ENCODE measurements at regions of chr15 and their contacts with region 1.

Region 1: GRCh38 chr15:82709421-82710207 is at the start of gene AP3B2:
- DNase-seq: peak; percentile 78
- ATAC-seq: peak; percentile 88
- H3K4me3 ChIP-seq: peak within 1 kb of the TSS in 4 of 5 experiments; percentile 38 to 72 (median 60)
- H3K4me3 Mint-ChIP-seq: peak within 1 kb of the TSS; percentile 77
- H3K27ac ChIP-seq: no peak within 1 kb of the TSS
- H3K27ac Mint-ChIP-seq: no peak within 1 kb of the TSS
- H3K4me1 ChIP-seq: peaks cover 0 to 12% of the 10 kb centered on the region in 2 donors
- H3K4me1 Mint-ChIP-seq: peaks cover 2% of the 10 kb centered on the region
- H3K27me3 ChIP-seq: peaks cover 0 to 45% (median 5%) of the 10 kb centered on the region in 4 experiments
- H3K27me3 Mint-ChIP-seq: peaks cover 30% of the 10 kb centered on the region
- CTCF ChIP-seq: no peak
- total RNA-seq, gene AP3B2: 0.15 and 0.61 TPM in 2 replicates

Region 2: DNA sequence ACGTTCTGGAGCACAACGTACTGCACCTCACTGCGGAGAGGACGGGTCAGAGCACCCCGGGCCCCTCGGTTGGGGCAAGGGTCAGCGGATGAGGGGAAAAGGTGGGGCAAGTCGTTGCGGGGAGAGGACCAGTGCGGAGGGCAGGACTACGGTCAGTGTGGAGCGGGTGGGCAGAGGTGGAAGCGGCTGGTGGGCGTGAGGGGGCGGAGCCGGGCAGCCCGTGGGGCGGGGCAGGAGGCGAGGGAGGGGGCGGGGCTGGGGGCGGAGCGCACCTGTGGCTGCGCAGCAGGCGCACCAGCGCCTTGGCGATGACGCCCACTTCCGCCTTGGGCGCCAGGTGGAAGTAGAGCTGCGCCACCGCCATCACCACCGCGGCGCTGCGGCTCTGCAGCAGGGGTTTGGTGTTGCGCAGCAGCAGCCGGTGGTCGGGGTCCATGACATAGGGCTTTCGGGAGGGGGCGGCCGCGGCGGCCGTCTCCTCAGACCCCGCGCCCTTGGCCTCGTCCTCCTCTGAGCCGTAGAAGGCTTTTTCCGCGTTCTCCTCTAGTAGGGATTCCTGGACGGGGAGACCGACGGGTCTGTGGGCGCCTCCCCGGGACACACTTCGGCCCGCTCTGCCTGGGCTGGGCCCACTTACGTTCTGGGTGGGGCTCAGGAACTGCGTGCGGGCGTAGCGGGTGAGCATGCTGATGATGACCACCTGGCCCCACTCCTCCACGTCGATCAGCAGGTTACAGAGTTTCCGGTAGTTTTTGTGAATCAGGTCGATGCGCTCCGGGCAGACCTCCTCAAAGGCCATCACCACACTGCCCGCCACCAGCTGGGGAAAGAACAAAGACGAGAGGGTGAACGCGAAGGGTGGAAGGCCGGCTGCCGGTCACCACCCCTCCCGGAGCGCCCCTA is 29.2 kb before region 1 on chr15:
- CTCF ChIA-PET with region 1: no interaction called
- POLR2A ChIA-PET with region 1: no interaction called
- intact Hi-C with region 1: loop called (anchors 1 kb)
- DNase-seq: peak; percentile 85
- ATAC-seq: peak; percentile 91
- H3K4me3 ChIP-seq: peak overlapping the region in 4 of 5 experiments; percentile 61 to 84 (median 72)
- H3K4me3 Mint-ChIP-seq: peak overlapping the region; percentile 92
- H3K27ac ChIP-seq: peak overlapping the region; percentile 46 to 65
- H3K27ac Mint-ChIP-seq: peak overlapping the region; percentile 87
- H3K4me1 ChIP-seq: peaks cover 14 to 15% of the 10 kb centered on the region in 2 donors
- H3K4me1 Mint-ChIP-seq: peaks cover 12% of the 10 kb centered on the region
- H3K27me3 ChIP-seq: peaks cover 0 to 21% (median 6%) of the 10 kb centered on the region in 4 experiments
- H3K27me3 Mint-ChIP-seq: peaks cover 6% of the 10 kb centered on the region
- CTCF ChIP-seq: peak; percentile 21

Region 3: GRCh38 chr15:82749951-82750830 is 40.6 kb after region 1 on chr15:
- CTCF ChIA-PET with region 1: no interaction called
- POLR2A ChIA-PET with region 1: no interaction called
- intact Hi-C with region 1: loop called (anchors 1 kb)
- DNase-seq: peak; percentile 86
- ATAC-seq: peak; percentile 95
- H3K4me3 ChIP-seq: peak overlapping the region; percentile 75 to 97 (median 79)
- H3K4me3 Mint-ChIP-seq: peak overlapping the region; percentile 98
- H3K27ac ChIP-seq: peak overlapping the region; percentile 72 to 82
- H3K27ac Mint-ChIP-seq: peak overlapping the region; percentile 90
- H3K4me1 ChIP-seq: peaks cover 16 to 20% of the 10 kb centered on the region in 2 donors
- H3K4me1 Mint-ChIP-seq: peaks cover 41% of the 10 kb centered on the region
- H3K27me3 ChIP-seq: no peaks in the 10 kb centered on the region
- H3K27me3 Mint-ChIP-seq: no peaks in the 10 kb centered on the region
- CTCF ChIP-seq: no peak

Region 4: DNA sequence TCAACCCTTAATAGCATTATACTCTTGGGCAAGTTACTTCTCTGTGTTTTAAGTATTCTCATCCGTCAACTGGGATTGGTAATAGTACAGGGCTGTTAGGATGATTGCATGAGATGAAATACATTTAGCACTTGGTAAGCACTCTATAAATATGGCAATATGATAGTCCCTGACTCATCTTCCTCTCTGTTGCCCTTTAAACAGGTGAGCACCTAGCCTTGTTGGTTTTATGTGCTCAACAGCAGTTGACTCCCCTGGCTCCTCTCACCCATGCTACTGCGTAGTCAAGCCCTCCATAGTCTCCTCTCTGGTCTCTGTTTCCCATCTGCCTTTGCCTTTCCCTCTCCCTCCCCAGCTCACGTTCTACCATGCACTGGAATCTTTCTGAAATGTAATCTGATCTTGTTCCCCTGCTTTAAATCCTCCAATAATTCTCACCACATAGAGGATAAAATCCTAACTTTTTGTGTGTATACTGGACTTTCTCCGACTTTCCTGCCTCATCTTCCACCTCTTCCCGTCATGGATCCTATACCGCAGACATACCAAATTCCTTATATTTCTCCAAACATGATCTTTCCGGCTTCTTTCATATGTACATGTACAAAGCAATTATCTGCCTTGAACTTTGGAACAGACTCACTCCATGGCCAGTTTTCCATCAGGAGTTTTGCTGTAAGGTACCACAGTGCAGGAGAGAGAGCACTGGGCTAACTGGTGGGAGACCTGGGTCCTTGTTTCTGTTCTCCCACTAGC is 53.9 kb after region 1 on chr15:
- CTCF ChIA-PET with region 1: no interaction called
- POLR2A ChIA-PET with region 1: no interaction called
- intact Hi-C with region 1: no loop called
- DNase-seq: no peak
- ATAC-seq: no peak
- H3K4me3 ChIP-seq: no peak overlapping the region
- H3K4me3 Mint-ChIP-seq: no peak overlapping the region
- H3K27ac ChIP-seq: no peak overlapping the region
- H3K27ac Mint-ChIP-seq: no peak overlapping the region
- H3K4me1 ChIP-seq: no peaks in the 10 kb centered on the region
- H3K4me1 Mint-ChIP-seq: peaks cover 4% of the 10 kb centered on the region
- H3K27me3 ChIP-seq: no peaks in the 10 kb centered on the region
- H3K27me3 Mint-ChIP-seq: no peaks in the 10 kb centered on the region
- CTCF ChIP-seq: no peak

Region 5: DNA sequence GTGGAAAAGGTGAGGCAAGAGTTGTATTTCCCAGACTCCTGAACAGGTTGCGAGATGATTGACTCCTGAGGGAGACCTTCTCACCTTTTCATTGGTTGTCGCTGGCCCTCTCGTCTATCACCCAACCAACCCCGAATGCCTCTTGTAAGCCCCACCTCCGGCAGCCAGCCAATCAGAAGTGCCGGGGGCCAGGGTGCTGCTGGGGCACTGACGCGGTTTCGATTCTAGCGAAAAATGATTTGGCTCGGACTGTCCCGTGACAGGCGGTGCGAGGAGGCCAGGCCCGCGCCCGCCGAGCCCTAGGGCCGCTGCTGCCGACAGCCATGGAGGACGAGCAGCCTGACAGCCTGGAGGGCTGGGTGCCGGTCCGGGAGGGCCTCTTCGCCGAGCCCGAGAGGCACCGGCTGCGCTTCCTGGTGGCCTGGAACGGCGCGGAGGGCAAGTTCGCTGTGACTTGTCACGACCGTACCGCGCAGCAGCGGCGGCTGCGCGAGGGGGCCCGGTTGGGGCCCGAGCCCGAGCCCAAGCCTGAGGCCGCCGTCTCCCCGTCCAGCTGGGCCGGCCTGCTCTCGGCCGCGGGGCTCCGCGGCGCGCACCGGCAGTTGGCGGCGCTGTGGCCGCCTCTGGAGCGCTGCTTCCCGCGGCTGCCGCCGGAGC is 99.9 kb after region 1 on chr15 and contains the start of gene WHAMM:
- CTCF ChIA-PET with region 1: no interaction called
- POLR2A ChIA-PET with region 1: no interaction called
- intact Hi-C with region 1: loop called (anchors 2 kb)
- DNase-seq: peak; percentile 97
- ATAC-seq: peak; percentile 89
- H3K4me3 ChIP-seq: peak within 1 kb of the TSS; percentile 82 to 96 (median 86)
- H3K4me3 Mint-ChIP-seq: peak within 1 kb of the TSS; percentile 86
- H3K27ac ChIP-seq: peak within 1 kb of the TSS; percentile 91 to 99
- H3K27ac Mint-ChIP-seq: peak within 1 kb of the TSS; percentile 95
- H3K4me1 ChIP-seq: peaks cover 31 to 41% of the 10 kb centered on the region in 2 donors
- H3K4me1 Mint-ChIP-seq: peaks cover 54% of the 10 kb centered on the region
- H3K27me3 ChIP-seq: no peaks in the 10 kb centered on the region
- H3K27me3 Mint-ChIP-seq: no peaks in the 10 kb centered on the region
- CTCF ChIP-seq: no peak
- total RNA-seq, gene WHAMM: 29.9 and 31.3 TPM in 2 replicates